ENCODE measurements at regions of chr7 and their contacts with region 1.

Region 1: DNA sequence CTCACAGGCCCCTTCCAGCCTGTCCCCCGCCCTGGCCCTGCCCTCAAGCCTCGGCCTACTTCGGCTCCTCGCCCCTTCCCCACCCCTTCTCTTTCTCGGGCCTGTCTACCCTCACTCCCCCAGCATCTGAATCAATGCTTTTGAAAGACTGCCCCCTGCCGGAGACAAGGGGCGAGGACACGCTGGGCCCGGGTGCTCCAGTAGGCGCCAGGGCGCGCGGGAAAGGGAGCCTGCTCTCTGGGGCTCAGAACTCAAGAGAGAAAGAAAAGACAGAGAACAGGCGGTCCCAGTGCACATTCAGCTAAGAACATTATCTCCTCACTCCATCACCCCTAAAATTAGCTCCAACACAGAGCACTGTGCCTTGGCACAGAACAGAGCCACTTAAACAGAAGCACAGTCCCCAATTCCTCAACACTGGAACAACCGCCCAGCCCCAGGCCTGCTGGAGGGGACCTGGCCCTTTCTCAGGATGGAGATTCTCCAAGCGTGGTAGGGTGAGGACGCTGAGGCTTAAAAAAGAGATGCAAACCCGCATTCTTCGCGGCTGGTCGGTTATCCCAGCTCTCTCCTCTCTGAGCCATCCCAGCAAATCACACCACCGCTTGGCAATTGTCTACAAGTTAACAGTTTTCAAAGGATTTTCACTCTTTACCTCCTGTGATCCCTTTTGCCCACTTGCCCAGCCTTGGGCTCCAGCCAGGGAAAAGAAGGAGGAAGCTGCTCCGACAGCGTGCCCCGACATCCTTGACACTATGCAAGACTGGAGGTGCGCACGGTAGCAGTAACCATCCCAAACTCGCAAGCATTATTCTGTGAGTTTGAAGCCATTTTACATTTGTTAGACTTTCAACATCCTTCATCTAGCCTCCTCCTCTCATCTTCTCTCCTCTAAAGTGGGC is 2.1 kb downstream of the GIGYF1 start:
- DNase-seq: peak; percentile 86
- ATAC-seq: peak; percentile 60
- H3K4me3 ChIP-seq: peak overlapping the region in 2 of 5 experiments; percentile 58 to 79
- H3K4me3 Mint-ChIP-seq: peak overlapping the region; percentile 89
- H3K27ac ChIP-seq: no peak overlapping the region
- H3K27ac Mint-ChIP-seq: peak overlapping the region; percentile 92
- H3K4me1 ChIP-seq: peaks cover 52 to 55% of the 10 kb centered on the region in 2 donors
- H3K4me1 Mint-ChIP-seq: peaks cover 51% of the 10 kb centered on the region
- H3K27me3 ChIP-seq: no peaks in the 10 kb centered on the region
- H3K27me3 Mint-ChIP-seq: no peaks in the 10 kb centered on the region
- CTCF ChIP-seq: peak; percentile 88

Region 2: GRCh38 chr7:99543081-99543850 is 1148.7 kb before region 1 on chr7:
- CTCF ChIA-PET with region 1: no interaction called
- POLR2A ChIA-PET with region 1: no interaction called
- intact Hi-C with region 1: no loop called
- DNase-seq: no peak
- ATAC-seq: no peak
- H3K4me3 ChIP-seq: no peak overlapping the region
- H3K4me3 Mint-ChIP-seq: no peak overlapping the region
- H3K27ac ChIP-seq: no peak overlapping the region
- H3K27ac Mint-ChIP-seq: no peak overlapping the region
- H3K4me1 ChIP-seq: no peaks in the 10 kb centered on the region
- H3K4me1 Mint-ChIP-seq: no peaks in the 10 kb centered on the region
- H3K27me3 ChIP-seq: no peaks in the 10 kb centered on the region
- H3K27me3 Mint-ChIP-seq: no peaks in the 10 kb centered on the region
- CTCF ChIP-seq: no peak

Region 3: GRCh38 chr7:100680167-100680575 is 11.8 kb before region 1 on chr7:
- CTCF ChIA-PET with region 1: interaction called, 53 read pairs
- POLR2A ChIA-PET with region 1: interaction called, 9 read pairs
- intact Hi-C with region 1: no loop called
- DNase-seq: peak; percentile 28
- ATAC-seq: no peak
- H3K4me3 ChIP-seq: no peak overlapping the region
- H3K4me3 Mint-ChIP-seq: no peak overlapping the region
- H3K27ac ChIP-seq: no peak overlapping the region
- H3K27ac Mint-ChIP-seq: peak overlapping the region; percentile 46
- H3K4me1 ChIP-seq: peaks cover 0 to 3% of the 10 kb centered on the region in 2 donors
- H3K4me1 Mint-ChIP-seq: peaks cover 7% of the 10 kb centered on the region
- H3K27me3 ChIP-seq: no peaks in the 10 kb centered on the region
- H3K27me3 Mint-ChIP-seq: no peaks in the 10 kb centered on the region
- CTCF ChIP-seq: no peak

Measured in B cell (primary cell).